Right ventricle myocardium inferior (tissue), 1 donor: ENCODE measurements at regions of chr3 and their contacts with region 1.

Region 1: GRCh38 chr3:128322066-128323022 is 144.3 kb downstream of the DNAJB8 start:
- DNase-seq: no peak
- ATAC-seq: peak; percentile 49

Region 2: DNA sequence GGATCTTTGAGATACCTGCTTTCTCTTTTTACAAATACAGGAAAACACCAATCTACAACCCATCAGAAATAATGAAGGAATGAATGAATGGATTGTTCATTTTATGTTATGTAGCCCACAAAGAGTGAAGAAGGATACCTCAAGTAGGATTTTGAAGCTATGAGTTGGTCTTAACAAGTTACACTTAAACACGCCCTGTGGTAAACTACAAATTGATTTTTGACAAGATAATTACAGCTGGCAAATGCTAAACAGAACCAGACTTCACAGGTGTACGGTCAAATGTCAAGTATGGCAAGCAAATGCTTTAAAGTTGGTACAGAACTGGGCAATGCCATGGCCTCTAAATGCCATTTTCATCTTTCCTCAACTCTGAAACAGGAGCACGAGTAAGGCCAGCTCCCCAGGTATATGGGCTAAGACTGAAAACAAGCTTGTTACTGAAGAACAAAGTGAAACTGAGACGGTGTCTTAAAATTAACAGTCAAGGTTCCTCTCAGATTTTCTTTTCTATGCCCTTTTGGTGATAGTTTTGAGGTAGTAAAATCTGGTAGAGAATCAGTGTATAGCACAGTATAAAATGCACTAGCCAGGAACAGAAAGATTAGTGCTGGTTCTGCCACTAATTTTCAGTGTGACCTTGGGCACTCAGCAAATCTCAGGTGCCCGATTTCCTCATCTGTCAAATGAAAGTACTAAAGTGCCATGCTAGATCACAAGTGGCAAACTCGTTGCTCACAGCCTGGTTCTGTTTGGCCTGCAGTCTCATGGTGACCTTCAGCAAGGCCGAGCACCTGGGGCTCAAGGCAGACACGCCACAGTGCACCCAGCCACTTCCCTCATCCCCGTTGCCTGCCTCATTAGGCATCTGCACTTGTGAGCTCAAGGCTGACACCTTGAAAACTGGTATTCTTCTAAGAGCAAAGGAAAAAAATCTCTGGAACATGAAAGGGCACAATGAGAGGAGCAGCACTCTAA is 208.2 kb before region 1 on chr3:
- intact Hi-C with region 1: no loop called
- DNase-seq: no peak
- ATAC-seq: peak; percentile 60

Region 3: GRCh38 chr3:128170805-128171516 is 151.4 kb before region 1 on chr3:
- intact Hi-C with region 1: loop called (anchors 2 kb)
- DNase-seq: no peak
- ATAC-seq: peak; percentile 69

Region 4: GRCh38 chr3:128226795-128227395 is 95.4 kb before region 1 on chr3:
- intact Hi-C with region 1: loop called (anchors 5 kb)
- DNase-seq: no peak
- ATAC-seq: peak; percentile 56

Region 5: DNA sequence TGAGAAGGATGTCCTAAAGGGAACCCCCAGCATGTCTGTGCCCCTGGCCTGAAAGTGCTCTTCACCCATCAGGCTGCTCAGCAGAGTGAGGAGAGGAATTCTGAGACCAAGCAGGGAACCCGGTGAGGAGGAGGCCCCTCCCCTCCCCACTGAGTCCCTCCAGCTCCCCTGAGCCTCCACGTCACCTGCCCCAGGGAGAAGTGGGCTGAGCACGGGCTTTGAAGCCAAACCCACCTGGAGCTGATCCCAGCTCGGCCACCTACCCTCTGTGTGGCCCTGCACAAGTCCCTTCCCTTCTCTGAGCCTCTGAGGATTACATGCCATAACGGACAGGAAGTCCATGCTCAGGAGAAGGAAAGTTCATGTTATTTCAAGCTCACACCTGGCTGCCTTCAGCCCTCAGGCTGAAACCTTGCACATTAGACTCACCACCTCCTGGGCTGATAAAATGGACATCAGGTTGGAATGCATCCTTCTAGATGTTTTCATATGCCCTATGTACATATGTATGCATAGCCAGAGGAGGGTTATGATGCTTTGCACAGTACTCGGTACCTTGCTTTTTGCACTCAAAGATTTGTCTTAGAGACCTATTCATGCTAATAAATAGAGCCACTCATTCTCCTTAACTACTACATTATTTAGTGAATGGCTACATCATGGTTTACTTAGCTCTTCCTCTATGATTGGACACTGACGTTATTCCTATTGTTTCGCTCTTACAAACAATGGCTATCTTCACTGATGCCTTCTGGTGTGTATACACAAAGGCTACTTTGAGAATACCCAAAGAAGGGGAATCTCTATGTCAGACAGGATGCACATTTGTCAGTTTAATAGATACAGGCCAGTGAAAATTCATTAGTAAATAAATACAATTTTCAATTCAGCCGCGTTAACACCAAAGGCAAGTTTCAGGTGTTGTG is 202.3 kb after region 1 on chr3:
- intact Hi-C with region 1: no loop called
- DNase-seq: no peak
- ATAC-seq: no peak

Region 6: DNA sequence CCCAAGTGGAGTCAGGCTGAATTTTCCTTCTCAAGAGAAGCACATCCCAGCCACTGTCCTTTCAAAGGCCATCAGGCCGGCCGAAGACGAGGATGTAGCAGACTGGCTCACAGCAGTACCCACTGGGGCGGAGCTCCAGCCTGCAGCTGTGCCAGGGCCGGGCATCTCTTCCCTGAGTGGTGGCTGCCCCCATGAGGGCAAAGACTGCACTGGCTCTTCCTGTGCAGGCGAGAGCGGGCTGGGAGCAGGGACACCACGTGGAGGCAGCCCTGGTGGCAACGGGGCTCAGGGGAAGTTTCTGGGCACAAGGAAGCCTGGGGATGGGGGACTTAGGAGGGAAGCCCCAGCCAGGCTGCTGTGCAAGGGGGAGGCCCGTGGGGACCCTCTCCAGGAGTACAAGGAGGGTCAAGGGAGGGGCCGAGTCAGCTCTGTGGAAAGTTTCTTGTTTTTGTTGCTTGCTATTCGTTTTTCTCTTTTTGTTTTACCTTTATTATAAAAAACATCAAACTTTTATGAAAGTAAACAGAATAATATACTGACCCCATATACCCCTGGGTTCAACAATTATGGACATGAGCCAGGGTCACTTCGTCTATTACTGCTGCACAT is 262.2 kb after region 1 on chr3:
- intact Hi-C with region 1: no loop called
- DNase-seq: peak; percentile 88
- ATAC-seq: peak; percentile 94